ENCODE measurements at regions of chr20 and their contacts with region 1.

Region 1: GRCh38 chr20:58087193-58087858 is 141.1 kb downstream of the ANKRD60 start:
- DNase-seq: peak; percentile 76
- H3K4me3 ChIP-seq: no peak overlapping the region
- H3K27ac ChIP-seq: no peak overlapping the region
- H3K4me1 ChIP-seq: peaks cover 15% of the 10 kb centered on the region
- H3K27me3 ChIP-seq: no peaks in the 10 kb centered on the region
- CTCF ChIP-seq: peak; percentile 96 to 99

Region 2: GRCh38 chr20:57596998-57597939 is 490.1 kb before region 1 on chr20:
- CTCF ChIA-PET with region 1: no interaction called
- dilution Hi-C with region 1: no loop called
- in situ Hi-C with region 1: no loop called
- intact Hi-C with region 1: loop called (anchors 1 kb)
- DNase-seq: peak; percentile 24
- H3K4me3 ChIP-seq: no peak overlapping the region
- H3K27ac ChIP-seq: no peak overlapping the region
- H3K4me1 ChIP-seq: peaks cover 9% of the 10 kb centered on the region
- H3K27me3 ChIP-seq: no peaks in the 10 kb centered on the region
- CTCF ChIP-seq: peak; percentile 62 to 87

Region 3: GRCh38 chr20:57622579-57623377 is 464.5 kb before region 1 on chr20:
- CTCF ChIA-PET with region 1: interaction called, 18 read pairs
- dilution Hi-C with region 1: no loop called
- in situ Hi-C with region 1: no loop called
- intact Hi-C with region 1: loop called (anchors 1 kb)
- DNase-seq: peak; percentile 91
- H3K4me3 ChIP-seq: no peak overlapping the region
- H3K27ac ChIP-seq: no peak overlapping the region
- H3K4me1 ChIP-seq: peaks cover 22% of the 10 kb centered on the region
- H3K27me3 ChIP-seq: no peaks in the 10 kb centered on the region
- CTCF ChIP-seq: peak; percentile 99 to 100

Region 4: GRCh38 chr20:57693002-57693640 is 394.2 kb before region 1 on chr20:
- CTCF ChIA-PET with region 1: no interaction called
- dilution Hi-C with region 1: no loop called
- in situ Hi-C with region 1: no loop called
- intact Hi-C with region 1: loop called (anchors 1 kb)
- DNase-seq: peak; percentile 99
- H3K4me3 ChIP-seq: no peak overlapping the region
- H3K27ac ChIP-seq: peak overlapping the region; percentile 88
- H3K4me1 ChIP-seq: peaks cover 93% of the 10 kb centered on the region
- H3K27me3 ChIP-seq: no peaks in the 10 kb centered on the region
- CTCF ChIP-seq: peak; percentile 49 to 69

Region 5: GRCh38 chr20:57902290-57902872 is 184.9 kb before region 1 on chr20:
- CTCF ChIA-PET with region 1: no interaction called
- dilution Hi-C with region 1: no loop called
- in situ Hi-C with region 1: no loop called
- intact Hi-C with region 1: loop called (anchors 5 kb)
- DNase-seq: peak; percentile 84
- H3K4me3 ChIP-seq: no peak overlapping the region
- H3K27ac ChIP-seq: no peak overlapping the region
- H3K4me1 ChIP-seq: peaks cover 32% of the 10 kb centered on the region
- H3K27me3 ChIP-seq: peaks cover 4% of the 10 kb centered on the region
- CTCF ChIP-seq: peak; percentile 34 to 44

Measured in mammary epithelial cell (primary cell).